Ovary (tissue), 10 donors: ENCODE measurements at regions of chr1 and their contacts with region 1.

Region 1: GRCh38 chr1:214123061-214123784 is 135.4 kb downstream of the PROX1 start:
- DNase-seq: peak; percentile 30 to 43 (median 34)
- H3K4me3 ChIP-seq: no peak overlapping the region
- H3K27ac ChIP-seq: no peak overlapping the region
- H3K4me1 ChIP-seq: no peaks in the 10 kb centered on the region
- H3K27me3 ChIP-seq: no peaks in the 10 kb centered on the region
- CTCF ChIP-seq: peak in 2 of 3 donors; percentile 31 to 54
- EP300 ChIP-seq: no peak
- POLR2A ChIP-seq: no peak

Region 2: GRCh38 chr1:213122514-213122929 is 1000.7 kb before region 1 on chr1:
- intact Hi-C with region 1: loop called in 1 of 4 experiments (anchors 10 kb)
- DNase-seq: no peak
- H3K4me3 ChIP-seq: no peak overlapping the region
- H3K27ac ChIP-seq: no peak overlapping the region
- H3K4me1 ChIP-seq: no peaks in the 10 kb centered on the region
- H3K27me3 ChIP-seq: no peaks in the 10 kb centered on the region
- CTCF ChIP-seq: peak; percentile 30 to 58 (median 32)
- EP300 ChIP-seq: no peak
- POLR2A ChIP-seq: no peak

Region 3: DNA sequence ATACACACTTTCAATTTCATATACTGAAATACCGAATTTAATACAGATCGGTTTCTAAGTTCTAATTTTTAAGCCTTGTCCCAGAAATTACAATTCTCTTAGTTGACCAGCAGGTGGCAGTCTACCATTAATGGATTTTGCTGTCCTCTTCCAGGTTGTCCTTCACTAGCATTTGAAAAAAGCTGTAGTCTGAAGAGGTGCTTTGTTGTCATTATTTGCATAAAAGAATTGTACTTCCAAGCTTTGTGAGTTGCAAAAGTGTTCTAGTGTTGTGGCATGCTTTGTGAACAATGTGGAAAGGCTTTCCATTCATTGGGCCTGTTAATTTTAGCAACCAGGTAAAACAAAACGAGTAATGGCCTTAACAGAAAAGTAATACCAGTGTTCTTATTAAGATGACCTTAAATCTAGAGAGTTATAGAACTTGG is 878.5 kb before region 1 on chr1:
- intact Hi-C with region 1: loop called in 1 of 4 experiments (anchors 10 kb)
- DNase-seq: peak in 1 of 5 donors; percentile 20
- H3K4me3 ChIP-seq: no peak overlapping the region
- H3K27ac ChIP-seq: no peak overlapping the region
- H3K4me1 ChIP-seq: no peaks in the 10 kb centered on the region
- H3K27me3 ChIP-seq: no peaks in the 10 kb centered on the region
- CTCF ChIP-seq: peak; percentile 32 to 75 (median 46)
- EP300 ChIP-seq: no peak
- POLR2A ChIP-seq: no peak